Activated CD8-positive, alpha-beta T cell treated with anti-CD3 and anti-CD28 coated beads for 36 hours (primary cell): ENCODE measurements at regions of chr11 and their contacts with region 1.

Region 1: GRCh38 chr11:45354976-45355705 is 69.0 kb upstream of the SYT13 start:
- DNase-seq: peak; percentile 91
- ATAC-seq: peak; percentile 96
- H3K4me3 Mint-ChIP-seq: peak overlapping the region; percentile 76
- H3K27ac Mint-ChIP-seq: peak overlapping the region; percentile 79
- H3K4me1 Mint-ChIP-seq: peaks cover 15% of the 10 kb centered on the region
- H3K27me3 Mint-ChIP-seq: no peaks in the 10 kb centered on the region
- CTCF ChIP-seq: no peak

Region 2: DNA sequence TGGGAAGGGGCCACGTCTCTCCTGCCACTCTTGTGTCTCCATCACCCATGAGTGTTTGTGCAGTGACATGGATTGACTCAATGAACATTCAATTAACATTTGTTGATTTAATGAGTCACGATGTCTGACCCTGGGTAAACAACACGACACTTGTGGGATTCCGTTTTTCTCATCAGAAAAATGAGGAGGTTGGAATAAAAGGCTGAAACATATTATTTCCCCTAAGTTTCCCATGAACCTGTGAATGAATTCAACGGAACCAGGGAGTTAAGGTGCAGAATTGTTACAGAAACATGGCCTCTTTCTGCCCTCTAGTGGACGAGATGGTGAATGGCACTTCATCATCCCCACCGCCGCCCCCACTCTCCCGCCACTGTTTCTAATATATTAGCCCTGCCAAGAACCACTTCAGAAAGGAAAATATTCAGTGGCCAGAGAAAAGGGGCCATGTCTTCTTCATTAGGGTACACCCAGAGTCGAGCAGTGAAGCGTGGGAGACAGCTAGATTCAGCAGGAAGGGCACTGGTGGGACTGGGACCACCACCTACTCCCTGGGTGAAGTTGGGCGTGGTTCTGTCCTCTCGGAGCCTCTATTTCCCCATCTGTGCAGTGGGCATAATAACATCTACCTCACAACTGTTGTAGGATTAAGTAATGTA is 22.7 kb before region 1 on chr11:
- CTCF ChIA-PET with region 1: interaction called, 22 read pairs
- POLR2A ChIA-PET with region 1: no interaction called
- intact Hi-C with region 1: no loop called
- DNase-seq: peak; percentile 45
- ATAC-seq: peak; percentile 66
- H3K4me3 Mint-ChIP-seq: no peak overlapping the region
- H3K27ac Mint-ChIP-seq: no peak overlapping the region
- H3K4me1 Mint-ChIP-seq: no peaks in the 10 kb centered on the region
- H3K27me3 Mint-ChIP-seq: peaks cover 7% of the 10 kb centered on the region
- CTCF ChIP-seq: peak; percentile 91

Region 3: GRCh38 chr11:45339729-45340519 is 15.2 kb before region 1 on chr11:
- CTCF ChIA-PET with region 1: interaction called, 12 read pairs
- POLR2A ChIA-PET with region 1: no interaction called
- intact Hi-C with region 1: no loop called
- DNase-seq: peak; percentile 98
- ATAC-seq: peak; percentile 100
- H3K4me3 Mint-ChIP-seq: peak overlapping the region; percentile 55
- H3K27ac Mint-ChIP-seq: no peak overlapping the region
- H3K4me1 Mint-ChIP-seq: peaks cover 10% of the 10 kb centered on the region
- H3K27me3 Mint-ChIP-seq: peaks cover 10% of the 10 kb centered on the region
- CTCF ChIP-seq: peak; percentile 89

Region 4: GRCh38 chr11:45635907-45636306 is 280.8 kb after region 1 on chr11:
- CTCF ChIA-PET with region 1: no interaction called
- POLR2A ChIA-PET with region 1: no interaction called
- intact Hi-C with region 1: no loop called
- DNase-seq: no peak
- ATAC-seq: no peak
- H3K4me3 Mint-ChIP-seq: no peak overlapping the region
- H3K27ac Mint-ChIP-seq: no peak overlapping the region
- H3K4me1 Mint-ChIP-seq: no peaks in the 10 kb centered on the region
- H3K27me3 Mint-ChIP-seq: peaks cover 18% of the 10 kb centered on the region
- CTCF ChIP-seq: no peak